Prostate gland (tissue), 2 donors: ENCODE measurements at regions of chr5 and their contacts with region 1.

Region 1: DNA sequence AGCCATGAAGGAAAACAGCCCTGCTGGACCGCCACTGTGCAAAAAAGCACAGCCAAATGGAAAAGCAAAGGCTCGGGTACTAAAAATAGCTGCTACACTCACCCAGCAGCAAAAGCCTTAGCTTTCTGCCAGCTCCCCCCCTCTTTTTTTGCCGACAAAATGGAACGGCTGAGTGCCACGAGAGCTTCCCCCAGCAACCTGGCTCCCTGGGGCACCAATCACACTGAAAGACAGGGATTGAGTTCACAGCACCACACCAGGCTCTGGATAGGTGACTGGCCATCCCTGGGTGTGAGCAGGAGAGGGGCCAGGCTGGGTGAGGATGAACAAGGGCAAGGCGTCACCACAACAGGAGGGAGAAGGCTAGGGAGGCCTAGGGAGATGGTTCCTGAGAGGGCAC is 66.7 kb downstream of the SIL1 start:
- DNase-seq: peak; percentile 16
- H3K4me3 ChIP-seq: no peak overlapping the region
- H3K27ac ChIP-seq: peak overlapping the region; percentile 69 to 71
- H3K4me1 ChIP-seq: peaks cover 14% of the 10 kb centered on the region
- H3K27me3 ChIP-seq: no peaks in the 10 kb centered on the region
- CTCF ChIP-seq: no peak
- POLR2A ChIP-seq: no peak

Region 2: GRCh38 chr5:139181835-139182452 is 50.5 kb after region 1 on chr5:
- intact Hi-C with region 1: loop called (anchors 5 kb)
- DNase-seq: no peak
- H3K4me3 ChIP-seq: no peak overlapping the region
- H3K27ac ChIP-seq: peak overlapping the region in 1 of 2 donors; percentile 21
- H3K4me1 ChIP-seq: peaks cover 22% of the 10 kb centered on the region
- H3K27me3 ChIP-seq: no peaks in the 10 kb centered on the region
- CTCF ChIP-seq: no peak
- POLR2A ChIP-seq: no peak